Posterior cingulate gyrus (tissue), 11 donors: ENCODE measurements at regions of chr11 and their contacts with region 1.

Region 1: GRCh38 chr11:114180301-114181055 is 115.7 kb upstream of the NNMT start:
- DNase-seq: peak in 3 of 10 donors; percentile 42 to 93 (median 58)

Region 2: GRCh38 chr11:113934761-113935160 is 245.7 kb before region 1 on chr11:
- intact Hi-C with region 1: no loop called
- DNase-seq: no peak

Region 3: DNA sequence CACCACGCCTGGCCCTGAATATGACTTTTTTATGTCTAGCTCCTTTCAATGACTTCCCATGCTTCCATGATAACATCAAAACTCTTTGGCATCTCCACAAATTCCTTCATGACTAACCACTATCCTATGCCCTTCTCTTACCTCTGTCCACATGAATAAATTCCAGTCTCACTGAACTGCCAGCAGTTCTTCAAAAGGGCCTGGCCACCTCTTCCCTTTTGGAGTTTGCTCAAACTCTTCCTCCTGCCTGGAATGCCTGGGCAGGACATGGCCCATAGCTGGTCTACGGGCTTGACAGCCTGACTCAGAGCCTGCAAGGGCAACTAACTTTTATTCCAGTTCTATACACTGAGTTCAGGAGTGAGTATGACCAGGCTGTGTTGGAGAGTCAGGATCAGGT is 162.8 kb before region 1 on chr11:
- intact Hi-C with region 1: no loop called
- DNase-seq: no peak

Region 4: GRCh38 chr11:114154271-114155047 is 26.0 kb before region 1 on chr11:
- intact Hi-C with region 1: no loop called
- DNase-seq: no peak

Region 5: GRCh38 chr11:114257621-114258558 is 77.4 kb after region 1 on chr11:
- intact Hi-C with region 1: loop called (anchors 5 kb)
- DNase-seq: peak in 5 of 10 donors; percentile 34 to 91 (median 41)